Adrenal gland (tissue), 19 donors: ENCODE measurements at regions of chr7 and their contacts with region 1.

Region 1: DNA sequence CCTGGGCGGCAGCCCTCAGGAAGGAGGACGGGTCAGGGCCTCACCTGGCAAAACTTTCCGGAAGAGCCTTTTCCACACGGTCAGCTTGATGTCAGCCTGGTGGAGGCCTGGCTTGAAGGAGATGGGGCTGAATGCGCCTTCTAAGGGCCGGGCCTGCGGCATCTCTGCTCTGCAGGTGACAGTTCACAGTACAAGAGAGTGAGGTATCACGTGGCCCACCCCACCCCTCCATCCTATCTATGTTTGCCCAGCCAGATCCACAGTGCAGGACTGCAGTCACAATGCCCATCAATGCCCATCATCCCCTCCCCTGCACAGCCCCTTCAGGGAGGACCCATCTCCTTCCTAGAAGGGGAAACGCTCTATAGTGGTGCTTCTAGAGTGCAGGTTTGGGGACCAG is 7.9 kb upstream of the NSUN5 start:
- DNase-seq: no peak
- H3K4me3 ChIP-seq: no peak overlapping the region
- H3K27ac ChIP-seq: no peak overlapping the region
- H3K4me1 ChIP-seq: no peaks in the 10 kb centered on the region
- H3K27me3 ChIP-seq: no peaks in the 10 kb centered on the region
- CTCF ChIP-seq: no peak
- POLR2A ChIP-seq: no peak

Region 2: DNA sequence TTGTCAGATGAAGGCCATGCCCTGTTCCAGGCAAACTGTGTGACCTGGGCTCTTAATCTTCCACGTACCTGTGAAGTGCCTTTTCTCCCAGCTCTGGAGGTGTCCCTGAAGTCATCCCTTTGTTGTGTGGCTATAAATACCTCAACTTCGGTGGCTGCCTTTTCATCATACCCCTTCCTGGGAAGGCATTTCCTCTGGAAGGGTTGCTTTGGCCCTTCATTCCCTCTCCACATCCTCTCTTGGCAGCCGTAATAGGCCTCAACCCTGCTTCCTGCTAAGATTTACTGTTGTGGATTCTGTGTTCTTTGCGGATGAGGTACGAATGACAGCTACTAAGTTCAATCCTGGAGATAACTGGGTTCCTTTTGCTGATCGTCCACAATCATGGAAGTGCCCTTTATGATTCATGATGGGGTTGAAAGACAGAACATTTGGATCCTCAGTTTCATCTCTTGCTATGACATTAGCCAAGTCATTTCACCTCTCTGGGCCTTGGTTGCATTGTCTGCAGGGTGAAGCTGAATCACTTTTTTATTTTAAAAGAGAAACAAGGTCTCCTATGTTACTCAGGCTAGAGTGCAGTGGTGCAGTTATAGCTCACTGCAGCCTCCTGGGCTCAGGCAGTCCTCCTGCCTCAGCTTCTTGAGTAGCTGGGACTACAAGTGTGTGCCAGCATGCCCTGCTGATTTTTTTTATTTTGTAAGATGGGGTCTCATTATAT is 35.1 kb after region 1 on chr7:
- intact Hi-C with region 1: no loop called
- DNase-seq: no peak
- H3K4me3 ChIP-seq: no peak overlapping the region
- H3K27ac ChIP-seq: peak overlapping the region in 1 of 5 donors; percentile 22
- H3K4me1 ChIP-seq: no peaks in the 10 kb centered on the region
- H3K27me3 ChIP-seq: no peaks in the 10 kb centered on the region
- CTCF ChIP-seq: no peak
- POLR2A ChIP-seq: no peak

Region 3: GRCh38 chr7:73446682-73447081 is 130.2 kb after region 1 on chr7:
- intact Hi-C with region 1: loop called (anchors 5 kb)
- DNase-seq: peak in 2 of 7 donors; percentile 40 to 55
- H3K4me3 ChIP-seq: no peak overlapping the region
- H3K27ac ChIP-seq: no peak overlapping the region
- H3K4me1 ChIP-seq: no peaks in the 10 kb centered on the region
- H3K27me3 ChIP-seq: no peaks in the 10 kb centered on the region
- CTCF ChIP-seq: no peak
- POLR2A ChIP-seq: no peak

Region 4: GRCh38 chr7:73451780-73452398 is 135.4 kb after region 1 on chr7:
- intact Hi-C with region 1: loop called (anchors 5 kb)
- DNase-seq: peak in 1 of 7 donors; percentile 51
- H3K4me3 ChIP-seq: no peak overlapping the region
- H3K27ac ChIP-seq: peak overlapping the region in 3 of 5 donors; percentile 46 to 69 (median 66)
- H3K4me1 ChIP-seq: peaks cover 16 to 18% of the 10 kb centered on the region in 2 donors
- H3K27me3 ChIP-seq: no peaks in the 10 kb centered on the region
- CTCF ChIP-seq: peak; percentile 98 to 100 (median 98)
- POLR2A ChIP-seq: no peak

Region 5: DNA sequence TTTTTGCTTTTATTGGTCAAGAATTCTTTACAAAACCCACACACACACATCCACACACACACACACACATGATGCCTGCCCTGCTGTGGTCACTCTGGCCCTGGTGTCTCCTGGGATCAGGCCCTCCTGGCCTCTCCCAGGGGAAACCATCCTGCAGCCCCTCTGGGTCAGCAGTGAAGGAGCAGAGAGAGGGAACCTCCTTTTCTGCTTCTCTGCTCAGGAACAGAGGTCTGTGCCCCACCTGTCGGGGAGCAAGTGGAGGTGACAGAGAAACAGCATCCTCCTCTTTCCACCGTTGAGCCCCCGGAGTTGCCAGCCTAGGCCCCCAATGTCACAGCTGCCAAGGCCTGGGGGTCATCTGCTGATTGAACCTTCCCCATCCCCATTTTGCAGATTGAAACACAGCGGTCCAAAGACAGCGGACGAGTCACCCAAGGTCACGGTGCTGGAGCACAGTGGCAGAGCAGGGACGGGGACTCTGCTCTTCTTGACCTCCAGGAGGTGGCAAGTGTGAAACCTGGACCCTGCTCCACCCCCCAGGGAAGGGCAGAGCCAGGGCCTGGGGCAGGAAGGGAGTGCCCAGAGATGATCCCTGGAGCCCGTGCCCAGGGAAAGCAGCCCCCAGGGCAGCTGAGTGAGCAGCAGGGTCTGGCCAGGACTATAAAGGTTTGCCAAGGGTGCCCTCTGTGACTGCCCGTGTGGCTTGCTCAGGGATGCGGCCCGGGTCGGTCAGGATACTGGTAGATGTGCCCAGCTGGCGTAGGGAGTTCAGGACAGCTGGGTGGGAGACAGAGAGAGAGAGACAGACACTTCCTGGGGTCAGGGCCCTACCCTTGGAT is 276.9 kb after region 1 on chr7:
- intact Hi-C with region 1: no loop called
- DNase-seq: no peak
- H3K4me3 ChIP-seq: no peak overlapping the region
- H3K27ac ChIP-seq: no peak overlapping the region
- H3K4me1 ChIP-seq: no peaks in the 10 kb centered on the region
- H3K27me3 ChIP-seq: no peaks in the 10 kb centered on the region
- CTCF ChIP-seq: no peak
- POLR2A ChIP-seq: no peak